CD8-positive, alpha-beta T cell (primary cell): ENCODE measurements at regions of chr2 and their contacts with region 1.

Region 1: GRCh38 chr2:98412751-98413458 is 31.8 kb upstream of the INPP4A start:
- DNase-seq: peak; percentile 25 to 85 (median 54)
- ATAC-seq: peak; percentile 85
- H3K4me3 ChIP-seq: no peak overlapping the region
- H3K4me3 Mint-ChIP-seq: no peak overlapping the region
- H3K27ac ChIP-seq: no peak overlapping the region
- H3K27ac Mint-ChIP-seq: no peak overlapping the region
- H3K4me1 ChIP-seq: peaks cover 5% of the 10 kb centered on the region
- H3K4me1 Mint-ChIP-seq: peaks cover 12% of the 10 kb centered on the region
- H3K27me3 ChIP-seq: no peaks in the 10 kb centered on the region
- H3K27me3 Mint-ChIP-seq: no peaks in the 10 kb centered on the region
- CTCF ChIP-seq: peak; percentile 91

Region 2: DNA sequence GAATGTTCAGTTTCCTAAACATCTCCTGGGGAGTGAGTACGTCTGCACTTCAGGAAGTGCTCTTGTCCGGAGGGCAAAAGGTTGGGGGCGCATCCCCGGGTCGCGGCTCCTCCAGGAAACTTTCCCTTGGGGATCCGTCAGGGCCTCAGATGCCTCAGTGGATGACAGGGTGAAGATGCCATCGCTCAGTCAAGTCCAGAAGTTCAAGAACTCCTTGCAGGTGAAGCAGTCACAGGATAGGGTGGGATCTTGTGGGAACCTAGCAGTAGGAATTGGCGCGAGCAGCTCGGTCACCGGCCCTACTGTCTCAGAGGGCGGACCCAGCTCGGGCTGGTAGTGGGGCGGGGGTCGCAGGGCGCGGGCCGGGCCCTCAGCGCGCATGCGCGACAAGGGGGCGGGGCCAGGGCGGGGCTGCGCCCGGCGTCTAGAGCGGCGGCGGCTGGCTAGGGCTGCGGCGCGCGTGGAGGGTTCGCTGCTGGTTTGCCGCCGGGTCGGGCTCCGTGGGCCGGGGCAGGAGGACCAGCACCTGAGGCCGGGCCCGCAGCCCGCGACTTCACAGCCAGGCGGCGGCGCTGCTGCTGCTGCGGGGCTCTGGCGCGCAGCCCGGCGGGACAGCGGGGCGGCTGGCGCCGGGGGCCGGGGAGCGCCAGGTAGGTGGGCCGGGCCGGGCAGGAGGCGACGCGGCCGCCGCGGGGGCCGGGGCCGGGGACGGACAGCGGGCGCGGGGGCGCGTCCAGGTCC is 31.7 kb after region 1 on chr2 and contains the start of gene INPP4A:
- CTCF ChIA-PET with region 1: interaction called, 12 read pairs
- POLR2A ChIA-PET with region 1: interaction called, 4 read pairs
- intact Hi-C with region 1: loop called in 1 of 2 experiments (anchors 2 kb)
- DNase-seq: peak; percentile 61 to 91 (median 76)
- ATAC-seq: peak; percentile 67
- H3K4me3 ChIP-seq: peak within 1 kb of the TSS; percentile 77 to 89
- H3K4me3 Mint-ChIP-seq: peak within 1 kb of the TSS; percentile 98
- H3K27ac ChIP-seq: peak within 1 kb of the TSS; percentile 70 to 81
- H3K27ac Mint-ChIP-seq: peak within 1 kb of the TSS; percentile 98
- H3K4me1 ChIP-seq: peaks cover 33% of the 10 kb centered on the region
- H3K4me1 Mint-ChIP-seq: peaks cover 42% of the 10 kb centered on the region
- H3K27me3 ChIP-seq: no peaks in the 10 kb centered on the region
- H3K27me3 Mint-ChIP-seq: no peaks in the 10 kb centered on the region
- CTCF ChIP-seq: no peak
- total RNA-seq, gene INPP4A: 60.3 to 67.5 TPM

Region 3: DNA sequence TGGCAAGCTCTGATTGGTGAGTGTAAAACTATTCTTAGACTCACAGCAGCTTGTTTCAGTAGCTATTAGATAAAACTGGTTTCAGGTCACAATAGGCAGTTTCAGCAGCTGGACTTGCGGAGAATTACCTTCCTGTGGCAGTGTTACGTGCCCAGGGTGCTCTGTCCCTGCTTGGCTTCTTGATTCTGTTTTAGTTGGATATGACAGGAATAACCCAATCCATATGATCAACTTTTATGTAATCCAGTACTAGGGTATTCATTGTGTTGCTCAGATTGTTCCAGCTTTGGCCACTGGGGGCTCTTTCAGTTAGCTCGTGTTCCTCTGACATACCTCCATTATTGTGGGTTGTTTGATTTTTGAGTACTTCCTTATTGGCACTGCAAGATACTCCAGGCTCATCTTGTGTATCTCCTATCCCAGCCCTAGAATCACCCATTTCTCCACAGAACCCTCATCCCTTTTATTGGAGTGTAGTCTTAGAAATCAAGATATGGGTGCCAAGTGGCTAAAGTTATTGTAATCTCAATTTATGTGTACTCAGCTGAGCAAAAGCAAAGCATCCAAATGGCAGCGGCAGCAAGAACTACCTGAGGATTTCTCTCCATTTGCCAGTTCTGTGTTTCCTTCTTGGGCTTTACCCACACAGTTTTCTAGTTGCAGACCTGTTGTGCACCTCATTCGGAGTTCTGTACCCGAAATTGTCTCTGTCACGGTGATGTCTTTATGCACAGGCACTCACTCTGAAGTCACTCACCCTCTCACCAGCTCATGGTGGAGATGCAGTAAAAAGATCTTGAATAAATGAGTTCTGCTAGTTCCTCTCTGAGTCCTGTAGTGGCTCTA is 75.1 kb after region 1 on chr2:
- CTCF ChIA-PET with region 1: interaction called, 52 read pairs
- POLR2A ChIA-PET with region 1: no interaction called
- intact Hi-C with region 1: no loop called
- DNase-seq: peak in 7 of 9 experiments; percentile 31 to 78 (median 64)
- ATAC-seq: peak; percentile 86
- H3K4me3 ChIP-seq: no peak overlapping the region
- H3K4me3 Mint-ChIP-seq: peak overlapping the region; percentile 47
- H3K27ac ChIP-seq: no peak overlapping the region
- H3K27ac Mint-ChIP-seq: peak overlapping the region; percentile 84
- H3K4me1 ChIP-seq: peaks cover 95% of the 10 kb centered on the region
- H3K4me1 Mint-ChIP-seq: peaks cover 97% of the 10 kb centered on the region
- H3K27me3 ChIP-seq: no peaks in the 10 kb centered on the region
- H3K27me3 Mint-ChIP-seq: no peaks in the 10 kb centered on the region
- CTCF ChIP-seq: peak; percentile 71

Region 4: GRCh38 chr2:98518090-98518489 is 105.2 kb after region 1 on chr2:
- CTCF ChIA-PET with region 1: interaction called, 70 read pairs
- POLR2A ChIA-PET with region 1: no interaction called
- intact Hi-C with region 1: loop called (anchors 1 kb)
- DNase-seq: peak; percentile 20 to 80 (median 64)
- ATAC-seq: peak; percentile 76
- H3K4me3 ChIP-seq: no peak overlapping the region
- H3K4me3 Mint-ChIP-seq: no peak overlapping the region
- H3K27ac ChIP-seq: no peak overlapping the region
- H3K27ac Mint-ChIP-seq: peak overlapping the region; percentile 65
- H3K4me1 ChIP-seq: peaks cover 40% of the 10 kb centered on the region
- H3K4me1 Mint-ChIP-seq: peaks cover 55% of the 10 kb centered on the region
- H3K27me3 ChIP-seq: no peaks in the 10 kb centered on the region
- H3K27me3 Mint-ChIP-seq: no peaks in the 10 kb centered on the region
- CTCF ChIP-seq: peak; percentile 81

Region 5: DNA sequence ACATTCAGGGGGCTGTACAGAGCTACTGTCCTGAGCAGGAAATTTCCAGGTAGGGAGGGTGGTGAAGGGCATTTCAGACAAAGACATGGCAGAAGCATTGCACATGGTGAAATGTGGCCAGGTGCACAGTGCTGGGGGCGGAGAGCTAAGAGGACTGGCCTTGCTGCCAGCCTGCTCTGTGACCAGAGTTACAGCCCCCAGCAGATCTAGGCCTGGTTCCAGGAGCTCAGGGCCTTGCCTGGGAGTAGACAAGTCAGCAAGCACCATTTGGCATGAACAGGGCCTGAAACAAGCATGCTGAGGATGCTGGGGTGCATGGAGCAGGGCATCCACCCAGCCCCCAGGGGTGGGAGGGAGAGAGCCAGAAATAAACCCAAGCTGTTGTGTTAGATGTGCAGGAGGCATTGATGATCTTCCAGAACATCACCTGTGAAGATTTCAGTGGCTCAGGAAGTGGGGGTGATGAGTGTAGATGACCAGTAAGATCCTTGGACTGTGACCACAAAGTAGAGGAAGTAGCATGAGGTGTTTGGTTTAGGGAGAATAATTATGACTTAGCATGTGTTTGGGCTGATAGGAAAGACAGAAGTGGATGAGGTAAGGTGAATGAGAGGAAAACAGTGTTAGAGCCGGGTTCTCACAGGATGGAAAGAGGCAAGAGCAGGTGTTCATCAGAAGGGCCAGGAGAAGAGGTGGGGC is 134.3 kb after region 1 on chr2:
- CTCF ChIA-PET with region 1: interaction called, 14 read pairs
- POLR2A ChIA-PET with region 1: interaction called, 3 read pairs
- intact Hi-C with region 1: no loop called
- DNase-seq: no peak
- ATAC-seq: no peak
- H3K4me3 ChIP-seq: no peak overlapping the region
- H3K4me3 Mint-ChIP-seq: no peak overlapping the region
- H3K27ac ChIP-seq: no peak overlapping the region
- H3K27ac Mint-ChIP-seq: peak overlapping the region; percentile 49
- H3K4me1 ChIP-seq: peaks cover 41% of the 10 kb centered on the region
- H3K4me1 Mint-ChIP-seq: peaks cover 46% of the 10 kb centered on the region
- H3K27me3 ChIP-seq: no peaks in the 10 kb centered on the region
- H3K27me3 Mint-ChIP-seq: no peaks in the 10 kb centered on the region
- CTCF ChIP-seq: no peak

Region 6: GRCh38 chr2:99066075-99066958 is 653.4 kb after region 1 on chr2:
- CTCF ChIA-PET with region 1: no interaction called
- POLR2A ChIA-PET with region 1: no interaction called
- intact Hi-C with region 1: loop called in 1 of 2 experiments (anchors 10 kb)
- DNase-seq: peak in 3 of 9 experiments; percentile 29 to 75 (median 45)
- ATAC-seq: peak; percentile 93
- H3K4me3 ChIP-seq: no peak overlapping the region
- H3K4me3 Mint-ChIP-seq: no peak overlapping the region
- H3K27ac ChIP-seq: peak overlapping the region in 1 of 2 experiments; percentile 70
- H3K27ac Mint-ChIP-seq: no peak overlapping the region
- H3K4me1 ChIP-seq: peaks cover 13% of the 10 kb centered on the region
- H3K4me1 Mint-ChIP-seq: peaks cover 2% of the 10 kb centered on the region
- H3K27me3 ChIP-seq: no peaks in the 10 kb centered on the region
- H3K27me3 Mint-ChIP-seq: no peaks in the 10 kb centered on the region
- CTCF ChIP-seq: no peak